Gastrocnemius medialis (tissue), 4 donors: ENCODE measurements at regions of chr6 and their contacts with region 1.

Region 1: DNA sequence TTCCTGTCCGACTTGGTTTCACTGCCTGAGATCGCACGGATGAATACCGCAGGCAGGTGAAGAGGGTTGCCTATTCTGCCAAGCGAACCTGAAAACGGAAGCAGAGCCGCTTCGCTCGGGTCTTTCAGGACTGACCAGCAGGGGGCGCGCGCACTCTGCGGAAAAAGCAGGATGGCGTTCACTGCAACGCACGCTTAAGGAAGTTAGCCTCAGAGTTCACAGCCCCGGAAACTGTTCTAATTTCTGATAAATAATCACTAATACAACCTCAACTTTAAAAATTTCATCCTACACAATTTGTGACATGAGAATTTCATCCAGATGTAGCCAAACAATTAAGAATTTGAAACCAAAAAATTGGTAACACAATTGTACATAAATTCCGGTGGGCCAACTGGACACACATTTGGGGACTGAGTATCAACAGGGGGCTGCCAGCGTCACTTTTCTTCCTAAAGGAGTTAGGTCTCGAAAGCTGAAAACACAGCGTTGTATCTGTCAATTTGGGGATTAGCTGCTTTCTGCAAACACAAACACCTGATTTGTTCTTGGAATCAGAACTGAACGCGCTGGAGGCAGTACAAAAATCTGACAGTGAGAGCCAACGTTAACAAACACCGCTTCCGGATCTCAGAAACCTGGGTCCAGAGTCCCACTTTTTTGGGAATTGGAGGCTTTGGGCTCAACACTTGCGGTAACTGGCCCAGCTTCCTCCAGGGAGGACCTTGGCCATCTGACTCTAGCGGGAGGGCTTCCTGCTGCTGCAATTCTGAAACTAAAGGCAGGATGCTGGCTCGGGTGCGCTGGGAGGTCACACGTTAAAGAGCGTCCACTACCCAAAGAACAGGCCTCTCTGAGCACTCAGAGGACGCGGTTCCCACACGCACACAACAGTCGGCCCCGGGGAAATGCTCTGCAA is 8.8 kb downstream of the PXDC1 start:
- DNase-seq: peak; percentile 68 to 80
- ATAC-seq: peak; percentile 72 to 87
- H3K4me3 ChIP-seq: peak overlapping the region; percentile 26 to 42 (median 30)
- H3K27ac ChIP-seq: peak overlapping the region; percentile 71 to 96 (median 90)
- H3K4me1 ChIP-seq: peaks cover 39 to 73% of the 10 kb centered on the region in 2 donors
- H3K27me3 ChIP-seq: no peaks in the 10 kb centered on the region
- CTCF ChIP-seq: peak; percentile 93 to 97 (median 95)
- POLR2A ChIP-seq: no peak

Region 2: DNA sequence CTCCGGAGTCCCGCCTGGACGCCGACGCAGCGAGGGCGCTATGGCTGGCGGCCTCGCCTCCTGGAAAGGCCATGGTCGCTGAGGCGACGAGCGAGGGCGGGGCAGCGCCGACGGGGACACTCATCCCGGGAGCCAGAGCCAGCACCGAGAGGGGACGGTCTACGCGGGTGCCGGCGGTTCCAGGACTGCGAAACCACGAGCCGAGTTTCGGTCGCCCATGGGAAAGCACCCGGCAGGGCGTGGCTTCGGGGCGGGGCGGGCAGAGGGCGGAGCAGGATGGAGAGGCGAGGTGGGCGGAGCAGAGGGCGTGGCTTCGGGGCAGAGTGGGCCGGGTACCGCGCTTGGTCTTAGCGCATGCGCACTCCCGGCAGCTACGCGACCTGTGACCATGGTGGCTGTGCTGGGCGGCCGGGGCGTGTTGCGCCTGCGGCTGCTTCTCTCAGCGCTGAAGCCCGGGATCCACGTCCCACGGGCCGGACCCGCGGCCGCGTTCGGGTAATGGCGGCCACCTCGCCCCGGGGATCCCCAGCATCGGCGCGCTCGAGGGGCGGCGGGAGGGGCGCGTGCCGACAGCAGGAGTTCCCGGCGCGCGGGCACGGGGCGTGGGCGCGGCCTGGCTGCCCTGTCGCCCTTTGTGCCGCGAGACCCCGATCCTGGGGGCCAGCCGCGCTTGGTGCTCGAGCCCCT is 624.2 kb before region 1 on chr6 and contains the start of gene BPHL:
- in situ Hi-C with region 1: loop called in 3 of 4 experiments (anchors 10 to 25 kb)
- intact Hi-C with region 1: no loop called
- DNase-seq: peak; percentile 95 to 96
- ATAC-seq: peak; percentile 96
- H3K4me3 ChIP-seq: peak within 1 kb of the TSS; percentile 78 to 90 (median 82)
- H3K27ac ChIP-seq: peak within 1 kb of the TSS; percentile 90 to 97 (median 96)
- H3K4me1 ChIP-seq: peaks cover 13 to 14% of the 10 kb centered on the region in 2 donors
- H3K27me3 ChIP-seq: no peaks in the 10 kb centered on the region
- CTCF ChIP-seq: no peak
- POLR2A ChIP-seq: peak; percentile 76
- total RNA-seq, gene BPHL: 4.7 to 8.7 (median 5.8) TPM

Region 3: DNA sequence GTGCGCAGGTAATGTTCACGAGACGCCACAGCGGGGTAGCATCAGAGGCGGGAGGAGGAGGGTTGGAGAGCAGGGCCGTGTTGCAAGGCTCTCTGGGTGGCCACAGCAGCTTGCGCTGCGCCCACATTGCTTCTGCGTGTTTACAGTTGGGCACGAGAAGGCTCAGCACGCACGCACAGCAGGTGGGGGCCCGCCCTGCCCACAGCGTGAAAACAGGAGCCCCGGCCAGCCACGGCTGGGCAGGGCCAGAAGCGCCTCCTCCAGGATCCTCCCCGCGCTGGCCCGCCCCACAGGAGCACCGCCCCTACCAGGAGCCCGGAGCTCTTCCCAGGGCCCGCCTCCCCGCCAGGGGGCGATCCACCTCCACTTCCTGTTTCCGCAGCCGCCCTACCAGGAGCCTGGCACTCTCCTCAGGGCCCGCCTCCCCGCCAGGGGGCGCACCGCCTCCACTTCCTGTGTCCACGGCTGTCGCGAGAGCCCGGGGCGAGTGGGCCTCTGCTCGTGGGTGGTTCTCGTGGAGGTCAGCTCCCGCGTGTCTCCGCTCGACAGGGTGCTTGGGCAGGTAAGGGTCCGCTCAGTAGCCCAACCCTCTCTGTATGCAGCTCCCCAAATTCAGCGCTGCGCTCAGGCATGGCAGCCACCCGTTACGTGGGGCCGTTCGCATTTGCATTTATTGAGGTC is 106.4 kb after region 1 on chr6 and contains the start of gene FAM50B:
- in situ Hi-C with region 1: no loop called
- intact Hi-C with region 1: loop called (anchors 2 kb)
- DNase-seq: peak; percentile 85 to 92
- ATAC-seq: peak; percentile 87 to 91
- H3K4me3 ChIP-seq: peak within 1 kb of the TSS; percentile 58 to 68 (median 60)
- H3K27ac ChIP-seq: peak within 1 kb of the TSS; percentile 80 to 95 (median 89)
- H3K4me1 ChIP-seq: peaks cover 4 to 8% of the 10 kb centered on the region in 2 donors
- H3K27me3 ChIP-seq: no peaks in the 10 kb centered on the region
- CTCF ChIP-seq: peak; percentile 94 to 99 (median 97)
- POLR2A ChIP-seq: peak; percentile 10 to 61
- total RNA-seq, gene FAM50B: 4.4 to 19.6 (median 15.3) TPM

Region 4: GRCh38 chr6:3929281-3929798 is 186.7 kb after region 1 on chr6:
- in situ Hi-C with region 1: loop called (anchors 5 to 10 kb)
- intact Hi-C with region 1: loop called (anchors 1 kb)
- DNase-seq: no peak
- ATAC-seq: peak in 1 of 2 donors; percentile 10
- H3K4me3 ChIP-seq: no peak overlapping the region
- H3K27ac ChIP-seq: peak overlapping the region; percentile 54 to 74 (median 65)
- H3K4me1 ChIP-seq: peaks cover 16 to 20% of the 10 kb centered on the region in 2 donors
- H3K27me3 ChIP-seq: no peaks in the 10 kb centered on the region
- CTCF ChIP-seq: no peak
- POLR2A ChIP-seq: no peak

Region 5: GRCh38 chr6:3977875-3978711 is 235.4 kb after region 1 on chr6:
- in situ Hi-C with region 1: no loop called
- intact Hi-C with region 1: loop called (anchors 1 kb)
- DNase-seq: peak in 1 of 2 donors; percentile 19
- ATAC-seq: peak; percentile 58 to 82
- H3K4me3 ChIP-seq: no peak overlapping the region
- H3K27ac ChIP-seq: no peak overlapping the region
- H3K4me1 ChIP-seq: no peaks in the 10 kb centered on the region
- H3K27me3 ChIP-seq: no peaks in the 10 kb centered on the region
- CTCF ChIP-seq: peak in 4 of 5 experiments; percentile 14 to 55 (median 40)
- POLR2A ChIP-seq: no peak

Region 6: DNA sequence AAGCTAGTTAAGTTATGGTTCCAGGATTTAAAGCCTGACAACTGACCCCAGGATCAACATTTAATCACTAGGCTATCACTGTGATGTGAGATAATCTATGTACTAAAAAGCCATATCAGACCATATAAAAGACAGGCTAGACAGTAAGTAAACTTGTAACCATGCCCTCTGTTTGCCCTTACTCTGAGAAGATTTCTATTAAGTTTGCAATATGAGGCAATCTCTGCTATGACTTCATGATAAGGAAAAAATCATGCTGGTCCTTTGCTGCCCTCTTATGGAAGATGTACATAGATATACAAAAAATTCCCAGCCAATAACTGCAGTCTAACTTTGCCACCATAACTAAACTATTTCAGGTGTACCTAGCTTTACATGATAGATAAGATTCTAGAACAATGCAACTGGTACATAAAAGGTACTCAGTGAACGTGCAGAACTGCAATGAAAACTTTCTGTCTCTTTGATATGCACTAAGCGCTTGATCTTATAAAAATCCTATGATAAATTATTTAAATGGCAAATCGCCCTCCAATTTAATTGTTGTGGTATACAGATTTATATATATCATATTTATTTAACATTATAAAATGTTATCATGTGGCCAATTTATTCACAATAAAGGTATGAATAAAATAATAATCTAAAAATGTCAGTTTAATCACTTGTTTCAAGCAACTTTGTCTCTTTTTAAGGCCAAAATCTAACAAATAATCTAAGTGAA is 265.8 kb after region 1 on chr6:
- in situ Hi-C with region 1: loop called in 2 of 4 experiments (anchors 5 kb)
- intact Hi-C with region 1: loop called (anchors 1 kb)
- DNase-seq: no peak
- ATAC-seq: peak; percentile 72 to 99
- H3K4me3 ChIP-seq: no peak overlapping the region
- H3K27ac ChIP-seq: peak overlapping the region; percentile 53 to 66 (median 57)
- H3K4me1 ChIP-seq: peaks cover 3 to 8% of the 10 kb centered on the region in 2 donors
- H3K27me3 ChIP-seq: no peaks in the 10 kb centered on the region
- CTCF ChIP-seq: peak; percentile 46 to 73 (median 62)
- POLR2A ChIP-seq: no peak

Region 7: GRCh38 chr6:4135665-4136353 is 393.1 kb after region 1 on chr6:
- in situ Hi-C with region 1: loop called in 1 of 4 experiments (anchors 25 kb)
- intact Hi-C with region 1: no loop called
- DNase-seq: peak; percentile 93 to 94
- ATAC-seq: peak; percentile 78 to 79
- H3K4me3 ChIP-seq: peak overlapping the region; percentile 80 to 99 (median 88)
- H3K27ac ChIP-seq: peak overlapping the region; percentile 90 to 98 (median 95)
- H3K4me1 ChIP-seq: peaks cover 19 to 29% of the 10 kb centered on the region in 2 donors
- H3K27me3 ChIP-seq: no peaks in the 10 kb centered on the region
- CTCF ChIP-seq: no peak
- POLR2A ChIP-seq: peak; percentile 53 to 59

Region 8: DNA sequence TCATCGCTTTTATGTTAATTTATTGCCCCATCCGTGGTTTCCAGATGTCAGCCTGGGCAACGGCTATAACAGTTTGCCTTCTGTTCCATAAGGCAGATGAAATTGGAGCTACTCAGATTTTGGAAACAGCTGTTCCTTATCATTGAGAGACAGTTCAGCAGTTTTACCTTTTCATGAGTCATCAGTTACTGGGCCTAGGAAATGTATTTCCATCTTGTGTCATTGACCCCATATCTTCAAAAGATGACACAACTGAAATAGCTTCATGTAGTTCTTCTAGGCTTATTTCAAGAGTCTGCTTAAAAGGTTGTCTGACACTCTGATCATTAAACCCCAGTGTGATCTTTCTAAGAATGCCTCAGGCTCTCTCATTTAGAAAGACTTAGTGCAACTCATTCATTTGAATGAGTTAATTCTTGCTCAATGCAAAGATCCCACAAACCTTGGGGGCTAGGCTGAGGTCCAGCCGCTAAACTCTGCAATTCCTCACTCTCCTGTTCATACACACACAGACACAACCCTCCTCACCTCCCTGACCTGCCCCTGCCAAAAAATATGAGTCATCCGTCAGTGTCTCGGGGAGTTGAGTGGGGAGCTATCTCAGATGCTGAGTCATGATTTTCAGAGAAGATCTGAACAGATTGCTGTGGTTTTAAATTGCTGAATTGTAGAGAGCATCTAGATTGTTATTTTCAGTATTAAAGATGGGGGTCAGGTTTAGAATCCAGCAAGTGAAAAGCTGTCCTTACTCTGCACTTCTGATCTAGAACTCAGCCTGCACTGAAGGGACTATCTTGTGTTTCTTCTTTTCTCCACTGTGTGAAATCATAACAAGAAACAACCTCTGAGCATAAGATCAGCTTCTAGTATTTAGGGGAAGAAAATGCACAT is 1199.3 kb after region 1 on chr6:
- in situ Hi-C with region 1: no loop called
- intact Hi-C with region 1: no loop called
- DNase-seq: peak; percentile 24 to 76
- ATAC-seq: peak; percentile 88 to 98
- H3K4me3 ChIP-seq: no peak overlapping the region
- H3K27ac ChIP-seq: peak overlapping the region; percentile 42 to 64 (median 48)
- H3K4me1 ChIP-seq: peaks cover 17 to 20% of the 10 kb centered on the region in 2 donors
- H3K27me3 ChIP-seq: no peaks in the 10 kb centered on the region
- CTCF ChIP-seq: no peak
- POLR2A ChIP-seq: no peak